ENCODE measurements at regions of chr2 and their contacts with region 1.

Region 1: DNA sequence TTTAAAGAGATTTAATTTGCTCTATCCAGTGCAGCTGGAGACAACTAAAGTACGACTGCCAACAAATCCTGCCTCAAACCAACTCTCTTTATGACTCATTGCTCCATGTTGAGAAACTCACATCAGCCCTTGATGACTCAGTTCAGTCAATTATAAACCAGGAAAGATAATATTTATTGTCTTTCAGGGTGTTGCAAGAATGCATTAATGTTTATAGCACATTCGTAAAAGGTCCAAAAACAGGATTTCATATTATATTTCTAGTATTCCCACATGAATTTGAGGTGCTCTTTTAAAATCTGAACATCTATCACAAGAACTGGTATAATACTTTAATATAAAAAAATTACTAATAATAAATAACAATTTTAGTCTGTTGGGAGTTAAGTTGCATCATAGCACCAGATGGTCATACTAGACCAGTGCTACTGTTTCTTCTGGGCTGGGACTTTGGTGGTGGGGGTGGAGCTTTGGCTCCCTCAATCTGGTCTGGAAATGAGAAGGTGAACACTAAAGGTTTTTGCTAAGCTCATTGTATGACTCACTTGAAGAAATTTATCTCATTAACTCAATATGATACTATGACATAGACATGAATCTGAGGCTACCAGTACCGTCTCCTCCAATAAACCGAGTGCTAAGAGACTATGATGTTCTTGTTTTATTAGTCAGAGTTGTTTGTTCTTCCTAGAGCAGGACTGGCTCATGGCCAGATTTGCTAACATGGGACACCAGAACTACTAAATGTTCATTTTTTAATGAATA is 26.6 kb upstream of the MAP3K20 start:
- DNase-seq: peak; percentile 95
- H3K4me3 ChIP-seq: no peak overlapping the region
- H3K27me3 ChIP-seq: no peaks in the 10 kb centered on the region
- CTCF ChIP-seq: no peak

Region 2: GRCh38 chr2:172735582-172736423 is 313.3 kb before region 1 on chr2 and contains the start of gene RAPGEF4:
- CTCF ChIA-PET with region 1: no interaction called
- POLR2A ChIA-PET with region 1: no interaction called
- DNase-seq: no peak
- H3K4me3 ChIP-seq: peak within 1 kb of the TSS; percentile 38
- H3K27me3 ChIP-seq: peaks cover 18% of the 10 kb centered on the region
- CTCF ChIP-seq: no peak
- polyA plus RNA-seq, gene RAPGEF4: 0.42 and 0.60 TPM in 2 replicates

Region 3: DNA sequence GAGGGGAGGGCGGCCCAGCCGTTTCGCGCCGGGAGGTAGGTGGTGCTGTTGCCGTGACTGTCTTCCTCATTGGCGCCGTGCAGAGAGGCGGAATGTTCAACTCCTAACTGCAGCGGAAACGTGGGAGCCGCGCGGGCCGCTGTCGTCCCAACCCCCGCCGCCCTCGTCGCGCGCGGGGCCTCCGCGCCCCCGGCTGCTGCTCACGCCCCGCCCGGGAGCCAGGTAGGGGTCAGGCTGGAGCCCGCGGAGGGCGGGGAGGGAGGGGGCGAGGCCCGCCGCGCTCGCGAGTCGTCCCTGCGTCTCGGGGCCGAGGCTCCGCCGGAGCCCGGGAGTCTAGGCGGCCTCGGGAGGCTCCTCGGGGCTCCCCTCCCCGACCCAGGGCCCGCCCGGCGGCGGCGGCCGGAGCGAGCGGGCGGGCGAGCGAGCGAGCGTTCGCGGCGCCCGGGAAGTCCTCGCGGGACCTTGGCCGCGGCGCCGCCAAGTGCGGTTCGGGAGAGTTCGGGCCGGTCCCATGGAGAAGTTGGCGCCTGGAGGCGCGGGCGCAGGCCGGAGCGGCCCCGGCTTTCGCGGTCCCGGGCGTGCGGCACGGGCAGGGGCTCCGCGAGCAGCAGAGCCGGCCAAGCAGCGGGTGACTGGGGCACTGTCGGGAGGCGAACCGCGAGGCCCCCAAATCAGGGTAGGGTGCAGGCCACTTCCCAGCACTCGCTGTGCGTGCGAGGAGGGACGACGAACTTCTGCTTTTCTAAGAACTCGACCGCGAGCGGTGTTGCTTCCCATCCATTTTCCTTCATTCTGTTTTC is 26.9 kb after region 1 on chr2 and contains the start of gene MAP3K20:
- CTCF ChIA-PET with region 1: interaction called, 4 read pairs
- POLR2A ChIA-PET with region 1: interaction called, 13 read pairs
- DNase-seq: no peak
- H3K4me3 ChIP-seq: peak within 1 kb of the TSS; percentile 77
- H3K27me3 ChIP-seq: no peaks in the 10 kb centered on the region
- CTCF ChIP-seq: peak; percentile 47
- polyA plus RNA-seq, gene MAP3K20: 45.4 and 76.7 TPM in 2 replicates